WTC11 (cell line): ENCODE measurements at regions of chr1 and their contacts with region 1.

Region 1: GRCh38 chr1:110495926-110496600 is 22.9 kb downstream of the KCNA10 start:
- DNase-seq: peak; percentile 88
- ATAC-seq: peak; percentile 79
- H3K4me3 Mint-ChIP-seq: no peak overlapping the region
- H3K27ac Mint-ChIP-seq: no peak overlapping the region
- H3K4me1 Mint-ChIP-seq: peaks cover 23% of the 10 kb centered on the region
- H3K27me3 Mint-ChIP-seq: peaks cover 2% of the 10 kb centered on the region; the same call in 1 of the 2 replicates
- CTCF ChIP-seq: peak; percentile 84

Region 2: GRCh38 chr1:110087812-110088738 is 408.0 kb before region 1 on chr1:
- CTCF ChIA-PET with region 1: interaction called, 10 read pairs
- POLR2A ChIA-PET with region 1: no interaction called
- DNase-seq: peak; percentile 60
- ATAC-seq: peak; percentile 76
- H3K4me3 Mint-ChIP-seq: no peak overlapping the region
- H3K27ac Mint-ChIP-seq: no peak overlapping the region
- H3K4me1 Mint-ChIP-seq: peaks cover 33% of the 10 kb centered on the region
- H3K27me3 Mint-ChIP-seq: peaks cover 50% of the 10 kb centered on the region
- CTCF ChIP-seq: peak; percentile 71

Region 3: DNA sequence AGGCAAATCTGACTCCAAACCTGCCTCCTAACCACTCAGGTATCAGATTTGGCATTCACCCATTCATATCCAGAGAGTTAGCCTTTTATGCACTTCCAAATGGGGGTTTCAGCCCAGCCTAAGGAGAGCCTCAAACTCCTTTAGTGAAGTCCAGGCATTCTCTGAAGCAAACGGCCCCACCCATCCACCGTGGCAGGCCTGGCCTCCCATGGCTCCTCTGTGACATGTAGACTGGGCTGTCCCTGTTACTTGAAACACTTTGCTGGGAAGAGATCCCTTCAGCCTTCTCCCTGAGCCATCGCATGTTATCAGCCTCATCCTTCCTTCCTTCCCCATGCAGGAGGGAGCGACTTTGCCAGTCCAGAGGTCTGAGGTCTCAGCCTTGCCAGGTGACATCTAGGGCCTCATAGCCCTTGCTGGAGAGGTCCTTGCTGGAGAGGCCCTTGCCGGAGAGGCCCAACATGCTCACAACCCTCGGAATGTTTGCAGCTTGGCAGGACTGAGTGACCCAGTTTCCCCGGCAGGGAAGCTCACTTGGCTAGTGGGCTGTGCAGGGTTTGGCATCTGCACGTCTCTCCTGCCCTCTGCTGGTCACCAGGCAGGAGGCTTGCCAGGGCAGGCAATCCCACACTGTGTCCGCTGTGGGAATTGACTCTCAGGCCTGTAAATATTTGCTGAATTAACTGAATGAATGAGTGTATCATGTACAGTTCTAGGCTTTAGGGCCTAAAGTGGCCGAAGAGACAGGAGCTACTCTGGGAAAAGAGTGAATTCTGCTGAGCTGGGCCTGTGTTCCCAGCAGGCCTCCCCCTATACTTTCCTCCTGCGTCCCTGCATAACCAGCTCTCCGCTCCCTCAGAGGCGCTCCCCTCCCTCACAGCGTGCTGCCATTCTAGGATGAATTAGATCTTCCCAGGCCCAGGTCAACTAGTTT is 183.6 kb before region 1 on chr1:
- CTCF ChIA-PET with region 1: interaction called, 33 read pairs
- POLR2A ChIA-PET with region 1: no interaction called
- DNase-seq: peak; percentile 80
- ATAC-seq: peak; percentile 96
- H3K4me3 Mint-ChIP-seq: peak overlapping the region; percentile 54
- H3K27ac Mint-ChIP-seq: no peak overlapping the region; the same call in 1 of the 2 replicates
- H3K4me1 Mint-ChIP-seq: peaks cover 24% of the 10 kb centered on the region
- H3K27me3 Mint-ChIP-seq: no peaks in the 10 kb centered on the region
- CTCF ChIP-seq: peak; percentile 77

Region 4: DNA sequence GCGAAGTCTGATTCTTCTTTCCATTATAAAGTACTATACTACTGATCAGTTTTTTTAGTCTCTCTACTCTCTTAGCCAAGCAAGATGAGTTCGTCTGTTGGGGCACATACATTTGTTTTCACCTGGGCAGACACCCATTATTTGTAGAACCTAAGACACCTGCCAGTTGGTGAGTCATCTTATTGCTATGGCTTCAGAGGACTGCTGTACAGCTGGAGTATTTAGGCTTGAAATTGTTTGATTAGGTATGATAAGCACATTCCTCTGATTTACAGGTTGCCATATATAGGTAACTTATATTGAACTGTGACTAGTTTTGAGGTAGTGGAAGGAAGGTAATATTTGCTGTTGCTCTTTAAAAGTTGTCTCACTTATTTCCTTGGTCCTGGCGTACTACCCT is 139.7 kb before region 1 on chr1:
- CTCF ChIA-PET with region 1: no interaction called
- POLR2A ChIA-PET with region 1: no interaction called
- DNase-seq: no peak
- ATAC-seq: no peak
- H3K4me3 Mint-ChIP-seq: no peak overlapping the region
- H3K27ac Mint-ChIP-seq: no peak overlapping the region
- H3K4me1 Mint-ChIP-seq: no peaks in the 10 kb centered on the region
- H3K27me3 Mint-ChIP-seq: no peaks in the 10 kb centered on the region
- CTCF ChIP-seq: no peak

Region 5: GRCh38 chr1:110433803-110434202 is 62.3 kb before region 1 on chr1:
- CTCF ChIA-PET with region 1: interaction called, 19 read pairs
- POLR2A ChIA-PET with region 1: no interaction called
- DNase-seq: peak; percentile 68
- ATAC-seq: peak; percentile 96
- H3K4me3 Mint-ChIP-seq: no peak overlapping the region
- H3K27ac Mint-ChIP-seq: no peak overlapping the region
- H3K4me1 Mint-ChIP-seq: peaks cover 21% of the 10 kb centered on the region
- H3K27me3 Mint-ChIP-seq: no peaks in the 10 kb centered on the region
- CTCF ChIP-seq: no peak

Region 6: GRCh38 chr1:110482662-110483307 is 13.3 kb before region 1 on chr1:
- CTCF ChIA-PET with region 1: interaction called, 83 read pairs
- POLR2A ChIA-PET with region 1: interaction called, 5 read pairs
- DNase-seq: no peak
- ATAC-seq: peak; percentile 72
- H3K4me3 Mint-ChIP-seq: no peak overlapping the region
- H3K27ac Mint-ChIP-seq: no peak overlapping the region
- H3K4me1 Mint-ChIP-seq: peaks cover 34% of the 10 kb centered on the region
- H3K27me3 Mint-ChIP-seq: no peaks in the 10 kb centered on the region; the same call in 1 of the 2 replicates
- CTCF ChIP-seq: no peak

Region 7: GRCh38 chr1:110524311-110525251 is 28.5 kb after region 1 on chr1:
- CTCF ChIA-PET with region 1: interaction called, 25 read pairs
- POLR2A ChIA-PET with region 1: no interaction called
- DNase-seq: peak; percentile 81
- ATAC-seq: peak; percentile 96
- H3K4me3 Mint-ChIP-seq: no peak overlapping the region
- H3K27ac Mint-ChIP-seq: no peak overlapping the region
- H3K4me1 Mint-ChIP-seq: no peaks in the 10 kb centered on the region
- H3K27me3 Mint-ChIP-seq: peaks cover 4% of the 10 kb centered on the region
- CTCF ChIP-seq: peak; percentile 88

Region 8: GRCh38 chr1:110565565-110565964 is 69.5 kb after region 1 on chr1:
- CTCF ChIA-PET with region 1: no interaction called
- POLR2A ChIA-PET with region 1: no interaction called
- DNase-seq: no peak
- ATAC-seq: peak; percentile 67
- H3K4me3 Mint-ChIP-seq: no peak overlapping the region
- H3K27ac Mint-ChIP-seq: no peak overlapping the region
- H3K4me1 Mint-ChIP-seq: peaks cover 10% of the 10 kb centered on the region
- H3K27me3 Mint-ChIP-seq: peaks cover 21% of the 10 kb centered on the region
- CTCF ChIP-seq: no peak